Heart right ventricle (tissue), 16 donors: ENCODE measurements at regions of chr4 and their contacts with region 1.

Region 1: GRCh38 chr4:165415910-165416309 is 37.1 kb downstream of the CPE start:
- DNase-seq: no peak
- ATAC-seq: no peak
- H3K4me3 ChIP-seq: no peak overlapping the region
- H3K27ac ChIP-seq: no peak overlapping the region
- H3K4me1 ChIP-seq: peaks cover 0 to 8% (median 0%) of the 10 kb centered on the region in 9 donors
- H3K27me3 ChIP-seq: no peaks in the 10 kb centered on the region
- CTCF ChIP-seq: no peak

Region 2: DNA sequence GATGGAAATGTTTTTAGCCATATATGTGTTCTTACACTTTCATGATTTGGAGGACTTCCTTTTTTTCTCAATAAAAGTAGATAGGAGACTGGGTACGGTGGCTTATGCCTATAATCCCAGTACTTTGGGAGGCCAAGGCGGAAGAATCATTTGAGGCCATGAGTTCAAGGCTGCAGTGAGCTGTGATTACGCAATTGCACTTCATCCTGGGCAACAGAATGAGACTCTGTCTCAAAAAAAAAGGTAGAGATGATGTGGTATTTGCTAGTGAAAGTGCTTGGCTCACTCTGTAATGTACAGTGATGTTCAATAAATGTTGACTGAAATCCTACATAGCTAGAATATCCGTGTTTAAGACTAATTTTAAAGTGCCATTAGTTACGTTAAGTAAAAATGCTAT is 181.1 kb before region 1 on chr4:
- intact Hi-C with region 1: no loop called
- DNase-seq: no peak
- ATAC-seq: no peak
- H3K4me3 ChIP-seq: no peak overlapping the region
- H3K27ac ChIP-seq: no peak overlapping the region
- H3K4me1 ChIP-seq: peaks cover 0 to 8% (median 0%) of the 10 kb centered on the region in 9 donors
- H3K27me3 ChIP-seq: no peaks in the 10 kb centered on the region
- CTCF ChIP-seq: no peak

Region 3: DNA sequence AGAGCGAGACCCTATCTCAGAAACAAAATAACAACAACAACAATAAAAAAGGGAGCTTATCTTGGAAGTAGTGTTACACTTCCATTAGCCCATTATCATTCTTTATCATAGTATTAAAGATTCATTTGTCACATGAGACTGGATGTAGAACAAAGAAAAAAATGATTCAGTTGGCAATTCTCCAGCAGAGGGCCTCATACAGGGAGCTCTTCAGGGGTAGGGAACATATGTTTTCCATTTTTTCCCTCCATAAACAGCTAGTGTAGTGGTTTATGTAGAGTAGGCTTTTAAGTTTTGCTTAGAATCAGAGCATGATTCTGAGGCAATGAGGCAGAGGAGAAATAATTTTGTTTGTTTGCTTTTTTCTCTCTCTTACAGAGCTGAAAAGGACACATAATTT is 31.3 kb before region 1 on chr4:
- intact Hi-C with region 1: loop called in 1 of 10 experiments (anchors 5 kb)
- DNase-seq: no peak
- ATAC-seq: no peak
- H3K4me3 ChIP-seq: no peak overlapping the region
- H3K27ac ChIP-seq: peak overlapping the region in 1 of 10 donors; percentile 19
- H3K4me1 ChIP-seq: peaks cover 0 to 11% (median 0%) of the 10 kb centered on the region in 9 donors
- H3K27me3 ChIP-seq: peaks cover 0 to 42% (median 6%) of the 10 kb centered on the region in 7 donors
- CTCF ChIP-seq: no peak

Region 4: DNA sequence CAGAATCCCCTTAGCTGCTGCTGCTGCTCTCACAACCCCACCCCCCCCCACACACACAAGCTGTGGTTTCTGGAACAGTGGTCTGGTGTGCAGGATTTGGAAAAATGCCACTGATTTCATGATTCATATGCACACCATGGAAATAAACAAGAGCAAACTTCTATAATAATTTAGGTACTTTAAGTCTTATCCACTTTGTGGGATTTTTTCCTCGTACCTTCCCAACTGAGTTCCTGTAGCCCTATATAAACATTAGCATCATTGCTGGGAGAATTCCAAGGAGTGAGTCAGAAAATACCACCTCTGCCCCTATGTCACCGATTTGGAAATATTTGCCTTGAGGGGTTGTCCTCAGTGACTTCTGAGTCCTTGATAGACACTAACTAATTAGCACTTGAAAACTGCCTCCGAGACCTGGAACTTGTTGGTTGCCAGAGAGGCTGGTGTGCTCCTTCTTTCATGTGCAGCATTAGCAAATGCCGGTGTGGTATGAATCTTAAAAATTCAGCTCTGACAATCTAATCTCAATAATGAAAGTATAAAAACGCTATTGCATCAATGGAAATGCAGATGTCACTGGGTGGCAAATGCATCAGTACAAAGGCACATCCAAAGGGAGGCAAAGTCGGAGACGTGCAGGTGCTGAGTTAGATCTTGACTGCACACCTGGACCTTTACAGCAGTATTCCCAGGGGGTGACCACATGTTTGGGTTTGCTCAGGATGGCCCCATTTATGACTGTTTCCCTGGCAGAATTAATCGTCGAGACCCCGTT is 24.7 kb after region 1 on chr4:
- intact Hi-C with region 1: no loop called
- DNase-seq: no peak
- ATAC-seq: no peak
- H3K4me3 ChIP-seq: no peak overlapping the region
- H3K27ac ChIP-seq: no peak overlapping the region
- H3K4me1 ChIP-seq: peaks cover 0 to 10% (median 0%) of the 10 kb centered on the region in 9 donors
- H3K27me3 ChIP-seq: peaks cover 0 to 4% (median 0%) of the 10 kb centered on the region in 7 donors
- CTCF ChIP-seq: no peak

Region 5: DNA sequence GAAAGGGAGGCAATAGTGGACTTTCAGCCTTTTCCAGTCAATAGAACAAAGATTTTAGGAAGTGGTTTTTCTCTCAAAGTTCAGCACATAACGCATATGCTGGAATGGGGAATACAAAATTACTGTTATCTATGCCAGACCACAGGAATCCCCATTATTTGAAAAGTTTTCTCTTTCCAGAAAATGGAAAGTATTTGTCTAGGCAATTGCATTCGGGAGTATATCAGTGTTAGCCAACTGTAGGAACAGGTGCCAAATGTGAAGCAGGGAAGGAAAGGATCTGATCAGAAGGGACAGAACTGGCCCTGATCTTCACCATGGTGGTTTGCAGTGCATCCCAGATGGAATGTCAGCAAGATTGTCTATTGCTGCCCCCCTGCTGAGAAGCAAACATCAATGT is 176.5 kb after region 1 on chr4:
- intact Hi-C with region 1: no loop called
- DNase-seq: no peak
- ATAC-seq: no peak
- H3K4me3 ChIP-seq: no peak overlapping the region
- H3K27ac ChIP-seq: peak overlapping the region in 1 of 10 donors; percentile 46
- H3K4me1 ChIP-seq: peaks cover 0 to 8% (median 0%) of the 10 kb centered on the region in 9 donors
- H3K27me3 ChIP-seq: no peaks in the 10 kb centered on the region
- CTCF ChIP-seq: no peak